Naive thymus-derived CD4-positive, alpha-beta T cell (primary cell): ENCODE measurements at regions of chr11 and their contacts with region 1.

Region 1: GRCh38 chr11:109853156-109853776 is 239.9 kb upstream of the ZC3H12C start:
- DNase-seq: no peak
- ATAC-seq: no peak
- H3K4me3 ChIP-seq: no peak overlapping the region
- H3K4me3 Mint-ChIP-seq: no peak overlapping the region
- H3K27ac ChIP-seq: no peak overlapping the region
- H3K27ac Mint-ChIP-seq: no peak overlapping the region
- H3K4me1 ChIP-seq: no peaks in the 10 kb centered on the region
- H3K4me1 Mint-ChIP-seq: no peaks in the 10 kb centered on the region
- H3K27me3 ChIP-seq: no peaks in the 10 kb centered on the region
- H3K27me3 Mint-ChIP-seq: peaks cover 0 to 3% (median 0%) of the 10 kb centered on the region in 5 donors

Region 2: DNA sequence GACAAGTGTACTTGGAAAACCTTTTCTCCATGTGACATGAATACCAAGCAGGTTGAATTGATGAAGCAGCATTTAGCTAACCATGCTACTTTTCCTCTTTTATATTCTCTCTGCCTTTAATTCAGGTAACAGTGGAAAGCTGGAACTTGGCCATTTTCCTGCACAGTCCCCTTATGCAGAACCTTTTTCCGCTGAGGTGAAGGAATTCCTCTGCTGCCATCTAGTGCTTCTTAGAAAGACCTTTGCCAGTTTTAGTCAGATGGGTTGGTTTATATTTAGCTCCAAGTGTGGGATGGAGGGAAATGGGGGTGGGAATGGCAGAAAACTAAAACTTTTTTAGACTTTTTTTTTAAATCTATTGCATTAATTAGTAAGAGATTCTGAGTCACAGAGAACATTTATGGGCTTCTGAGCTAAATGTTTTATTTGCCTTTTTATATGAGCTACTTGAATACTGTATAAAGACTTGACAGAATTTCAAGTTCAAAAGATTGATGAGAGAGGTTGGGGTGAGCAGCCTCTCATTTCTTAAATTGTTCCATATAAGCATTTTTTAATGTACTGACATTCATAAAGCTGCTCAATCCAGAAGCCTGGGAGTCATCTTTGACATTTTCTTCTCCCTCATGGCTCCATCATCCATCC is 86.0 kb after region 1 on chr11:
- CTCF ChIA-PET with region 1: no interaction called
- POLR2A ChIA-PET with region 1: no interaction called
- intact Hi-C with region 1: loop called in 1 of 2 experiments (anchors 2 kb)
- DNase-seq: no peak
- ATAC-seq: no peak
- H3K4me3 ChIP-seq: no peak overlapping the region
- H3K4me3 Mint-ChIP-seq: no peak overlapping the region
- H3K27ac ChIP-seq: no peak overlapping the region
- H3K27ac Mint-ChIP-seq: no peak overlapping the region
- H3K4me1 ChIP-seq: no peaks in the 10 kb centered on the region
- H3K4me1 Mint-ChIP-seq: no peaks in the 10 kb centered on the region
- H3K27me3 ChIP-seq: no peaks in the 10 kb centered on the region
- H3K27me3 Mint-ChIP-seq: peaks cover 4 to 28% (median 20%) of the 10 kb centered on the region in 5 donors

Region 3: GRCh38 chr11:109993786-109994185 is 140.5 kb after region 1 on chr11:
- CTCF ChIA-PET with region 1: no interaction called
- POLR2A ChIA-PET with region 1: no interaction called
- intact Hi-C with region 1: no loop called
- DNase-seq: no peak
- ATAC-seq: no peak
- H3K4me3 ChIP-seq: no peak overlapping the region
- H3K4me3 Mint-ChIP-seq: no peak overlapping the region
- H3K27ac ChIP-seq: no peak overlapping the region
- H3K27ac Mint-ChIP-seq: no peak overlapping the region
- H3K4me1 ChIP-seq: no peaks in the 10 kb centered on the region
- H3K4me1 Mint-ChIP-seq: no peaks in the 10 kb centered on the region
- H3K27me3 ChIP-seq: no peaks in the 10 kb centered on the region
- H3K27me3 Mint-ChIP-seq: peaks cover 0 to 12% (median 0%) of the 10 kb centered on the region in 5 donors

Region 4: DNA sequence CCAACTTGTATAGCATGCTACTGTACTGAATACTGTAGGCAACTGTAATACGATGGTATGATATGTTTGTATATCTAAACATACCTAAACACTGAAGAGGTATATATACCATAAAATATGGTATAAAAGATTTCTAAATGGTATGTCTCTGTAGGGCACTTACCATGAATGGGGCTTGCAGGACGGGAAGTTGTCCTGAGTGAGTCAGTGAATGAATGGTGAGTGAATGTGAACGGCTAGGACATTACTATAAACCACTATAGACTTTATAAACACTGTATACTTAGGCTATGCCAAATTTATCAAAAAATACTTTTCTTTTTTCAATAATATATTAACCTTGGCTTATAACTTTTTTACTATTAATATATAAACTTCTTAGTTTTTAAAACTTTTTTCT is 306.8 kb after region 1 on chr11:
- CTCF ChIA-PET with region 1: no interaction called
- POLR2A ChIA-PET with region 1: no interaction called
- intact Hi-C with region 1: no loop called
- DNase-seq: no peak
- ATAC-seq: no peak
- H3K4me3 ChIP-seq: no peak overlapping the region
- H3K4me3 Mint-ChIP-seq: no peak overlapping the region
- H3K27ac ChIP-seq: no peak overlapping the region
- H3K27ac Mint-ChIP-seq: no peak overlapping the region
- H3K4me1 ChIP-seq: no peaks in the 10 kb centered on the region
- H3K4me1 Mint-ChIP-seq: no peaks in the 10 kb centered on the region
- H3K27me3 ChIP-seq: no peaks in the 10 kb centered on the region
- H3K27me3 Mint-ChIP-seq: peaks cover 0 to 10% (median 4%) of the 10 kb centered on the region in 5 donors